Dorsolateral prefrontal cortex (tissue), 120 donors: ENCODE measurements at regions of chr5 and their contacts with region 1.

Region 1: DNA sequence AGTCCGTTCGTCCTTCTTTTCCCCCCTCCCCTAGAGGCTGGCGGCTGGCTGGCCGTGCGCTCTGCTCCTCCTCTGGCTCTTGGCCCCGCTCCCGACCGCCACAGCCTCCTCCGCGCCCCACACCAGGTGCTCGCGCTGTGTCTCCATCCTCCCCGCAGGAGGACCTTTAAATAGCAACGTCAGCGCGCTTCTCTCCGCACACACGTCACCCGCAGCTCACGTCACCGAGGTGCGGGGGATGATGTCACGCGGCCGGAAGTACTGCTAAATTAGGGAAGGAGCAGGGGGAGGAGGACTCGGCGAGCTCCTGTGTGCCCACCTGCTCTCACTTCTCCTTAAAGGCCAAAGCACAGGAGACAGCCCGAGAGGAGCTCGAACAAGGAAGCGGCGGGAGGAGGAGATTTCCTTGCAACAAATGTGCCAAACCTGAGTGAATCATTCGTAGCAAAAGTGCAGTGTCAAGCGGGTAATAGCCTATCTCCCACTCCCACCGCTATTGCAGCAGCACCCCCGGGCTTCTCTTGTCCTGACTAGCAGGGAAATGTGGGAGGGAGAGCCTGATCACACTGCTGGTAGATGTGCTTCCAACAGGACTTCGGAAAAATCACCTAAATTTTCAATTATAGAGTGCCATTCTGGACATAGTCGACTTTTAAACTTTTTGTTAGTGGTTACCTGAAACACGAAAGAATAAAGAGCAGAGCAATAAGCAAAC is 614 bp upstream of the HOMER1 start:
- DNase-seq: peak; percentile 76 to 95 (median 90)
- H3K4me3 ChIP-seq: peak overlapping the region; percentile 66 to 98 (median 86)
- H3K27ac ChIP-seq: peak overlapping the region; percentile 53 to 99 (median 96)
- H3K27me3 ChIP-seq: no peaks in the 10 kb centered on the region
- CTCF ChIP-seq: peak in 3 of 56 donors; percentile 1 to 4 (median 1)

Region 2: DNA sequence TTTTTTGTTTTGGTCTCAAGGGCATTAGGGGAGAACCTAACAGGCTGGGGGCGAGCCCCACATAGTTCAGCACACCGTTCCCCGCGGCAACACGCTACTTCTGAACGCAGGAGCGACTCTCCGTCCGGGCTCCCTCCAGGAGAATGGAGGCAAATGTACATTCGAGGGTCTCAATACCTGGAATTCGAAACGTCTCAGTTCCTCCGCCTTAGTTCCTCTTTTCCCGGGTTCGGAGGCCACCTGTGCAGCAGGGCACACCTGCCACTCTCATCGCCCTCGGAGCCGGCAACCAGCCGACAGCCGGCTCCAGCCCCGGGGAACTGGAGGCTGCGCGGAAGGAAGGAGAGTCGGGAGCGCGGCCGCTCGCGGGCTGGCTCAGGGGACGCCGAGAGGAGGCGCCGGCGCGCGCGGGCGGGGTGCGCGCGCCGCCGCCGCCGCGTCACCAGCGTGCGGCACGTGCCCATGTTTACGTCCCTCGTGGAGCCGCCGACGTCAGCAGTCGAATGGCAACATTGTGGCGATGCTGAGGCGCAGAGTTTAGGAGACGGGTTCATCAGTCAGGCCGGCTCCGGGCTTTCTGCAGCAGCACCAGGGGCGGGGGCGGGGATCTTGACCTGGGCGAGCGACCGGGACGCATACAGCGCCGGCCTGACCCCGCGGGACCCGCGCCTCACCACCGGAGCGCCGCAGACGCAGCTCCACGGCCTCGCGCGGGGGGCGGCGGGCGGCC is 278.7 kb before region 1 on chr5 and contains the start of gene JMY:
- intact Hi-C with region 1: loop called in 1 of 2 experiments (anchors 2 kb)
- DNase-seq: peak; percentile 72 to 90 (median 88)
- H3K4me3 ChIP-seq: peak within 1 kb of the TSS; percentile 64 to 99 (median 92)
- H3K27ac ChIP-seq: peak within 1 kb of the TSS; percentile 41 to 95 (median 87)
- H3K27me3 ChIP-seq: no peaks in the 10 kb centered on the region
- CTCF ChIP-seq: peak in 25 of 56 donors; percentile 4 to 61 (median 26)
- total RNA-seq, gene JMY: 21.8 to 40.5 (median 29.8) TPM

Region 3: DNA sequence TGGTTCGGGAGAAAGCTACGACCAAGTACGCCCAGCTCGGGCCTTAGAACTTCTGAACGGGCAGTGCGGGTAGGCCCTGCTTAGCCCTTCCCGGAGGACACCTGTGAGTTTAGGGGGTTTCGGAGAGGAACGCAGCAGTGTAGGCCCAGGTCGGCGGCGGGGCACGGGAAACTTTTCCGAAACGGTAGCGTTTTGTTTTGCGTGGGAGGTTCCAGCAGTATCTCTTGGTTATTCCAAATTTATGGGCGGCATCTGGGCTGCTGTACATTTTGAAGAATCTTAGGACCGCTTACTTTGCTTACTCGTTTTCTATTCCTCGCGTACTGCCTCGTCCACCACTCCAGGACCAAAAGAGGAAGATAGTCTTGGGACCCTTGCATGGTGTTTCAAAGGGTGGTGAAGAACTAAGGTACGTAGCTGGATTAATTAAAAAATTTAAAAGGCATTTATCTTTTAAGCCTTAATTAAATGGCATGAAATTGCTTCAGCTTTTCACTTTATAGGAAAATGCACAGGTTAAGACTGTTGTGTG is 98.2 kb after region 1 on chr5:
- intact Hi-C with region 1: loop called in 1 of 2 experiments (anchors 5 kb)
- DNase-seq: peak in 2 of 10 donors; percentile 32 to 58
- H3K4me3 ChIP-seq: peak overlapping the region; percentile 53 to 98 (median 88)
- H3K27ac ChIP-seq: peak overlapping the region in 57 of 59 donors; percentile 33 to 95 (median 80)
- H3K27me3 ChIP-seq: no peaks in the 10 kb centered on the region
- CTCF ChIP-seq: peak in 1 of 56 donors; percentile 1